ENCODE measurements at regions of chr16 and their contacts with region 1.

Region 1: DNA sequence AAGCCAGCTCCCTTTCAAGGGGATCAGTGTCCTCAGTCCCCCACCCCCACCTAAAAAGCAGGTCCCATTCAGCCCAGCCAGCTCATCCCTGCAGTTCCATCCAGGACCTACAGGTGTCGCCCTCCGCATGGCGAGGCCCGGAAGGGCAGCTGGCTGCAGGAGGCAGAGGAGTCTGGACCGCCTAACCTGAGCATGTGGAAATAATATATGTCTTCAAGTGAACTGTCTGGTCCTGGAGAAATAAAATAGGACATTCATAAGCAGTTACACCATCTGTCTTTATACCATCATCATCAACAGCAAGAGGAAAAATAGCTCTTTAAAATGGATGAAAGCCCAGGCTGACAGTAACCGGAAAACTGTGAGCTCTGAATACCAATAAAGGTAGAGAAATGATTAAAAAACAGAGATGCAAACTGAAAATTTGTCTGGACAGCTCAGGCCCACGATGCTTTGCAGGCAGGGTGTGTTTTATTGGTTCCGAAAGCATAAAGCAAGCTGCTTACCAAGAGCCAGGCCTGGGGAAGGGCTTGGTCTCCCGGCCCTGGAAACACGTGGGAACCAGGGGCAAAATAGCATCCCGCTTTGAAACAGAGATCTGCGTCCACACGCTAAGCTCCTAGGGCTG is 215.2 kb downstream of the ZFHX3 start:
- DNase-seq: peak; percentile 81
- CTCF ChIP-seq: peak; percentile 100

Region 2: DNA sequence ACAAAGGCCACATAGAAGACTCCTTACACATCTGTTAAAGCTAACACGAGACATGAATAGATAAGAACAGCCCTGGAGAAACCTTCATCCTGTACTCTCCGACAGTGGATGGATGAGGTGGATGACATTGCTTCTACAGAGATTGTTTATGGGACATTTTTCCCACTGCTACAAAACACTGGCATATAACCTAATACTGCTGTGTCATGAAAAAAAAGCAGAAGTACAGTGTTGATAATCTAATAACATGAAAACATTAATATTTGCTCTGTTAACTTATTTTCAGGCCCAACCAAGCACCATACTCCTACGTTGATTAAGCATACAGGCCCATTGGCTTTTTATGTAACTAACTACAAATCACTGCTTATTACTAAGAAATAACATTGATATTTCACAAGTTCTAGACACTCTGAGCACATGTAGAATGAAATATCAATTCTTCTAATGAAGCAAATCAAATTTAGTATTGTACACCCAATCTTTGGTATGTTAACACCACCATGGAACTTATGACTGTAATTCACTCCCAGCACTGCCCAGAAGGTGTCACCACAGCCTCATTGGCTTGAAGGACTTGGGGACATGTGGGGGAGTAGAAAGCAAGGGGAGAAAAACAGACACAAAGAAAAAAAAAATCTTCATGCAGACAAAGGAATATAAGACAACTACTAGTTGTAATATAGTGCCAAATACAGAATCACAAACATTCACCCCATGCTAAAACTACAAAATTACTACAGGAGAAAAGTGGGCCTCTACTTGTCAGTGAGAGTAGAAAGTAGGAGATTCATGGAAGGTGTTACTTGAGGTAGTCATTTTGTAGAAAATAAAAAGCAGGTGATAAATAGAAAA is 330.8 kb before region 1 on chr16:
- CTCF ChIA-PET with region 1: interaction called, 15 read pairs
- POLR2A ChIA-PET with region 1: no interaction called
- DNase-seq: peak; percentile 61
- CTCF ChIP-seq: peak; percentile 90

Region 3: DNA sequence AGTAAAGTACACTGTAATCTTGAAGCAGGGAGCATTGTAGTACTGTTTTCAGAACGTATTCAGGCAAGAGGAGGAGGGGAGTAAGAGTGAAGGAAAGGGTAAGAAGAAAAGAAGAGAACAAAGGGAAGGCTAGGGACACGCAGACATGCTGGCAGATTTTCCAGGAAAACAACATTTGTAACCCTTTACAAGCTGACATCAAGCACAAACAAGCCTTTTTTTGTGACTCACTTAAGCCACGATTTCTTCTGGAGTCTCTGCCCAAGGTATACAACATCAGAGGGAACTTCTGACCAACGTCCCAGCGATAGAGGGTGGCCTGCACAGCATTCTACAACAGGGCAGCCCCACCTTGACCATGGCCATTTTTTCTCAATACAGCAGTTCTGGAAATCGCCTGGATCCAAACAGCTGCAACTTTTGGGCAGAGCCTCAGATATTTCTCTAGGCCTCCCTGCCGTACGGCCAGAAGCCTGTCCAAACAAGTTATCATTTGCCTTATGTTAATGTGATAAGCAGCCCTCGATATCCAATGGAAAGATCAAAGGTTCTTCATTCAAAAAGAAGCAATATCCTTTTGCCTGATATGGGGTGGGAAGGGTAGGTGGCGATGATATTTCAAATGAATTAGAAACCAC is 32.1 kb before region 1 on chr16:
- CTCF ChIA-PET with region 1: interaction called, 34 read pairs
- POLR2A ChIA-PET with region 1: no interaction called
- DNase-seq: no peak
- CTCF ChIP-seq: no peak

Region 4: DNA sequence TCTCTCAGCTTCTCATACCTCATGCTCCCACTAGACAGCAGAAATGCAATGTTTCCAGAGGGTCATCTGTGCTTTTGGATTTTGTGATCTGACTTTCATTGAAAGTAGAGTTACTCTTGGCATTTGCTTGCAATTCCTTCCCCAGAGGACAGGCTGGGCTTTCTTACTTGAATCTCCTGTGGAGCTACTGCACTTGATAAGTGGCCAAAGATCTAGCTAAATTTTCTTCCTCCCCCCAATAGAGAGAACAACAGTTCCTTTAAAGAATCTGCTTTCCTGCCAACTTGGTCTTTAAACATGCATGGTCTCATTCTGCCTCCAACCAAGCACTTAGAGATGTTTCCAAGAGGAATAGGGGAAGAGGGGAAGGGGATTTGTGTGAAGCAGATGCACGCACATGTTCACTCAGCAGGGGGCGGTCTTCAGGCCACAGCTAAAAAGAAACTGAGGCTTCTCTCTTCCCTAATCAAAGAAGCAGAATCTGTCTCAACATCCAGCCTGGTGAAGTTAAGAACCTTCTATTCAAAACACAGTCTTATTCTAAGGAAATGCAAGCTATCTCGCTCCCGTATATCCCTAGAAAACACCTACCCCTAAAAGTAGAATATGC is 14.4 kb before region 1 on chr16:
- CTCF ChIA-PET with region 1: interaction called, 33 read pairs
- POLR2A ChIA-PET with region 1: no interaction called
- DNase-seq: no peak
- CTCF ChIP-seq: no peak

Region 5: GRCh38 chr16:72856797-72857196 is 24.1 kb after region 1 on chr16:
- CTCF ChIA-PET with region 1: interaction called, 94 read pairs
- POLR2A ChIA-PET with region 1: interaction called, 3 read pairs
- DNase-seq: peak; percentile 53
- CTCF ChIP-seq: peak; percentile 47

Region 6: GRCh38 chr16:73025151-73025855 is 192.6 kb after region 1 on chr16:
- CTCF ChIA-PET with region 1: no interaction called
- POLR2A ChIA-PET with region 1: no interaction called
- DNase-seq: no peak
- CTCF ChIP-seq: no peak

Measured in GM10248 (cell line).